ENCODE measurements at regions of chr9 and their contacts with region 1.

Region 1: GRCh38 chr9:21836437-21837161 is 34.2 kb downstream of the MTAP start:
- DNase-seq: peak; percentile 48
- H3K4me3 Mint-ChIP-seq: peak overlapping the region; percentile 5
- H3K27ac Mint-ChIP-seq: peak overlapping the region; percentile 85
- H3K4me1 Mint-ChIP-seq: peaks cover 53% of the 10 kb centered on the region
- H3K27me3 Mint-ChIP-seq: no peaks in the 10 kb centered on the region
- CTCF ChIP-seq: no peak

Region 2: DNA sequence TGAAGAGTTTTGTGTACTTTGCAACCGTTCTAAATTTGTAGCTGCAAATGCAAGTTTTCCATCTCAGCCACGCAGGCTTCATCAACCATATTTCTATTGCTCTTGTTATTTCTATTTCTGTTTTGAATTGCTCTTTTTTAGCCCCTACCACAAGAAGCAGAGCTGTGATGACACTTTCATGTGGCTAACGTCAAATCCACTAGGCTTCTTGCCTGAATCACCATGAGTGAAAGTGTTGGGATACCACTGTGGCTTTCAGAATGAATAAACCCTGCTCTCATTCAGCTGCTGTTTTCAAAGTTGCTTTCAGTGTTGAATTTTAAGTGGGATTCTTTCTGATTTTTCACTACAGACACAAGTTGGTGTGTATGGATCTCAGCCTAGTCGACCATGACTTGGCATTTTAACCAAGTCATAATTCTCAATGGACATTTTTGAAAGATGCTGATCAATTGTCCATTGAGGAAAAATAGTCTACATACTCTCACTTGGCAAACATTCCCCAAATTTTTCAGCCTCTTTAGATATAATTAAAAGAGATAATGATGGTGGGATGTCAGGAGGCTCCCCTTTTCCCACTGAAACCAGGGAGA is 75.2 kb before region 1 on chr9:
- CTCF ChIA-PET with region 1: no interaction called
- intact Hi-C with region 1: no loop called
- DNase-seq: no peak
- H3K4me3 Mint-ChIP-seq: no peak overlapping the region
- H3K27ac Mint-ChIP-seq: no peak overlapping the region
- H3K4me1 Mint-ChIP-seq: peaks cover 16% of the 10 kb centered on the region
- H3K27me3 Mint-ChIP-seq: no peaks in the 10 kb centered on the region
- CTCF ChIP-seq: no peak

Region 3: DNA sequence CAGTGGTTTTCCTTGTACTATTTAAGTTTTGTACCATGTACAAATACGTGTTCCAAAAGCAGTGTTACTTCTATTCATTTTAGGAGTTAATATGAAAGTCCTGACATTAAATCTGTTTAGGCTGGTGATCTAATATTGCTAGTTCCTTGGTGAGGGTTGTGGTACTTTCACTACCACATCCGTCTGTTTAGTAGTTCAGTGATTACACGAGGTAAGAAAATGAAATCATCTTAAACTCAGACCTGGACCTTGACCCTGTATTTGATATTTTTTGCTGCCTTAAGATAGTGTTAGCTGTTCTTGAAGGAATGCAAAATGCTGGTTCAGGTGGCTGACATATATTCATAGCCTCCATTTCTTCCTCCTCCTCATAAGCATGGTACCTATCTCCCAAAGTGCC is 16.2 kb after region 1 on chr9:
- CTCF ChIA-PET with region 1: interaction called, 4 read pairs
- intact Hi-C with region 1: loop called (anchors 2 kb)
- DNase-seq: no peak
- H3K4me3 Mint-ChIP-seq: peak overlapping the region; percentile 26
- H3K27ac Mint-ChIP-seq: peak overlapping the region; percentile 70
- H3K4me1 Mint-ChIP-seq: peaks cover 54% of the 10 kb centered on the region
- H3K27me3 Mint-ChIP-seq: no peaks in the 10 kb centered on the region
- CTCF ChIP-seq: no peak

Region 4: GRCh38 chr9:21873540-21874221 is 37.1 kb after region 1 on chr9:
- CTCF ChIA-PET with region 1: no interaction called
- intact Hi-C with region 1: loop called (anchors 5 kb)
- DNase-seq: no peak
- H3K4me3 Mint-ChIP-seq: no peak overlapping the region
- H3K27ac Mint-ChIP-seq: peak overlapping the region; percentile 50
- H3K4me1 Mint-ChIP-seq: peaks cover 27% of the 10 kb centered on the region
- H3K27me3 Mint-ChIP-seq: no peaks in the 10 kb centered on the region
- CTCF ChIP-seq: no peak

Region 5: GRCh38 chr9:21958833-21959232 is 122.2 kb after region 1 on chr9:
- CTCF ChIA-PET with region 1: no interaction called
- intact Hi-C with region 1: no loop called
- DNase-seq: no peak
- H3K4me3 Mint-ChIP-seq: no peak overlapping the region
- H3K27ac Mint-ChIP-seq: no peak overlapping the region
- H3K4me1 Mint-ChIP-seq: no peaks in the 10 kb centered on the region
- H3K27me3 Mint-ChIP-seq: no peaks in the 10 kb centered on the region
- CTCF ChIP-seq: no peak